MCF 10A (cell line): ENCODE measurements at regions of chr6 and their contacts with region 1.

Region 1: GRCh38 chr6:98469141-98469540 is 365.2 kb upstream of the POU3F2 start:
- DNase-seq: no peak
- H3K4me3 Mint-ChIP-seq: no peak overlapping the region
- H3K27ac Mint-ChIP-seq: no peak overlapping the region
- H3K4me1 Mint-ChIP-seq: no peaks in the 10 kb centered on the region
- H3K27me3 Mint-ChIP-seq: peaks cover 28% of the 10 kb centered on the region
- CTCF ChIP-seq: no peak

Region 2: GRCh38 chr6:98036344-98036923 is 432.7 kb before region 1 on chr6:
- CTCF ChIA-PET with region 1: no interaction called
- POLR2A ChIA-PET with region 1: no interaction called
- intact Hi-C with region 1: no loop called
- DNase-seq: no peak
- H3K4me3 Mint-ChIP-seq: no peak overlapping the region
- H3K27ac Mint-ChIP-seq: no peak overlapping the region
- H3K4me1 Mint-ChIP-seq: no peaks in the 10 kb centered on the region
- H3K27me3 Mint-ChIP-seq: peaks cover 54% of the 10 kb centered on the region
- CTCF ChIP-seq: no peak

Region 3: GRCh38 chr6:98487612-98488011 is 18.5 kb after region 1 on chr6:
- CTCF ChIA-PET with region 1: no interaction called
- POLR2A ChIA-PET with region 1: no interaction called
- intact Hi-C with region 1: loop called (anchors 1 kb)
- DNase-seq: no peak
- H3K4me3 Mint-ChIP-seq: no peak overlapping the region
- H3K27ac Mint-ChIP-seq: no peak overlapping the region
- H3K4me1 Mint-ChIP-seq: no peaks in the 10 kb centered on the region
- H3K27me3 Mint-ChIP-seq: peaks cover 22% of the 10 kb centered on the region
- CTCF ChIP-seq: no peak

Region 4: DNA sequence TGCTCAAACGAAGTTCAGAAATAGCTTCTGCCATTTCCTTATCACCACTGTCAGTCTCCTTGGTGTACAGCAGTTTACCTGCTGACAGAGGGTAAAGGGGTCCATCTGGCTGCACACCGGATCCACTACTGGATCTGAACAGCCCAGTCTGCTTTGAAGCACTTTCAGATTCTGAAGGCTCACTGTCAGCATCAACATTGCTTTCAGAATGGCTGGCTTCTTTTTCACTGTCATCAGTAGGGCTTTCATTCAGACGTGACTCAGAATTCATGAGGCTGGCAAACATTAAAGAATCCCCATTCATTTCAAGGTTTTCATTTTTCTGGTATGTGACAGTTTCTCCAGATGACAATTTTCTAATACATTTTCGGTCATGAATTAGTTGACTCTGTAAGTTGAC is 976.9 kb after region 1 on chr6:
- CTCF ChIA-PET with region 1: no interaction called
- POLR2A ChIA-PET with region 1: no interaction called
- intact Hi-C with region 1: no loop called
- DNase-seq: no peak
- H3K4me3 Mint-ChIP-seq: no peak overlapping the region
- H3K27ac Mint-ChIP-seq: no peak overlapping the region
- H3K4me1 Mint-ChIP-seq: no peaks in the 10 kb centered on the region
- H3K27me3 Mint-ChIP-seq: no peaks in the 10 kb centered on the region
- CTCF ChIP-seq: no peak